ENCODE measurements at regions of chr6 and their contacts with region 1.

Region 1: GRCh38 chr6:130872250-130873095 is 45.3 kb downstream of the SMLR1 start:
- DNase-seq: peak; percentile 32

Region 2: DNA sequence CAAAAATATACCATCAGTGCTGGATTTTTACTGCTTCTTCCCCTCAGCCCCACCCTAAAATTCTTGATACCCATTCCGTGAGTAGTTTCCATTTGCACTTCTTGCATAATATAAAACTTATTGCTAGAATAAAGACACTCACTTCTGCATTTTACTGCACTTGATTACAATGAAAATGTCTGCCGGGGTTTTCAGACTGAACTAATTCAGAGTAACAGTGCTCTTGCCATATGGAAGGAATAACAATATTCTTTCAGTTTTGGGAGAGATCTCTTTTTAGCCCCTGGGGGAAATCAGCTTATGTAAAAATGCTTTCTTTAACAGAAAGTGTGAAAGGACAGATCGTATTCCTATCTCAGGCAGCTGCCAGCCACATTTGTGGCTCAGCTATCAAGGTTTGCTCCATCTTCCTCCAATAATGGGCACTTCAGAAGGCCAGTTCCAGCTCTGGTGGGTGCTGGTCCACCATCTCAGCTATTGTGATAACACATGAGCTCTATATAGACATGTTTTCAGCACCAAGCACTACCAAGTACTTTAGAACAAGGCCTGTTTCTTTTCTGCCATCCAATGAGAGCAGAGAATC is 36.3 kb before region 1 on chr6:
- in situ Hi-C with region 1: no loop called
- DNase-seq: no peak

Region 3: DNA sequence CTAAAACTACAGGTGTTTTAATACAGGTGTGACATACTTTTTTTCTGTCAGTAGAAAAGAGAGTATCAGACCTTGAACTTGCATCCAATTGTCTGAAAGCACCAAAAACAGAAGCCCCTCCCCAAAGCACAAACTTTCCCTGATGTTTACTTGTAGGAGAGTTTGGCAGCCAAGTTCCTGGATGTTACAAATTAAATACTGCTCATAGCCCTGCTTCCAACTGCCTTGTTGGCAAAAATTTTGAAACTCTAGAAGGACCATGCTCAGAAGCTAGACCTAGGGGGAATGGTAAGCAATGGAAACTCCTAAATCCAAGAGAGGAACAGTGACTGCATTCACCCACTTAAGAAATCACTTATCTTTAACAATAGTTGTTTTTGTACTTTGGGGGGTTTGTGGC is 683.5 kb after region 1 on chr6:
- in situ Hi-C with region 1: loop called (anchors 25 kb)
- DNase-seq: no peak